Activated CD4-positive, alpha-beta T cell treated with anti-CD3 and anti-CD28 coated beads for 36 hours (primary cell): ENCODE measurements at regions of chr1 and their contacts with region 1.

Region 1: DNA sequence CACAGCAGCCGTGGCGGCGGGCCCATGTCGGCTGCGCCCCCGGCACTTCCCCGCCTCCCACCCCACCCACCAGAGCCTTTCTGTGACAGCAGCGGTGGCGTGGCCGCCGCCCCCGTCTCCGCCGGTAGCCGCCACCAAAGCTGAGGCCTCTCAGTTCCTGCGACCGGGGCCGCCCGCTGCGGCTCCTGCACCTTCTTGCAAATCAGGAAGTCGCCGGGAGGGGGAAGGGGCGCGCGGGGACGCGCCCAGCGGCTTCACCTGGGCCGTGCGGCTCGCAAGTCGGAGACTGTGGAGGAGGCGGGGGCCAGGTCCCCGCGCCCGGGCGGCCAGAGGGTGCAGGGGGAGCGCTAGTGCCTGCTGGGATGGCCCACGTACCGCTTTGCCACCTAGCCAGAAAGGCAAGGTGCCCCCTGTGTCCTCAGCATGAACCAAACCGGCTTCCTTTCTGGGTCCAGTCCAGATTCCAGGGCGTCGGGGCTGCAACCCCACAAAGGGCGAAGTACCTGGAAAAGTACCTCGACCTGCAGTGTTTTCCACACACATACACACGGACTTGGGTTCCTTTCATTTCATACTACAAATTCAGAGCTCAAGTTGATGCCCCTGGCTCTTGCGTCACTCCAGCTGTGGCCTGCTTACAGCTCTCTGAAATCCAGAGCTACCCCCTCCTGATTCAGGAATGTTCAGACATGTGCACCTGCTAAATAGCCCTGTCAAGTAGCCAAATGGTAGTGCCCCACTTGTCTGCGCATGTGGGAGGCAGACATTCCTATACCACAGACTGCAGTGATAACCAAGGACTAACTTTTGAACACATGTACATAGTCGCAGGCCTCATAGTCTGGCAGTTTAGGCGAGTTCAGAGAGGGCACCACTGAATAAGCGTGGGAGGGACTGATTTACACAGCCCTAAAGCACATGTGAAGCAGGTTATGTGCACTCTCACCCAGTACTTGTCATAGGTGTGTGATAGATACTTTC is at the start of gene DENND1B:
- DNase-seq: peak; percentile 88
- ATAC-seq: peak; percentile 78
- H3K4me3 Mint-ChIP-seq: peak within 1 kb of the TSS; percentile 90
- H3K27ac Mint-ChIP-seq: peak within 1 kb of the TSS; percentile 99
- H3K4me1 Mint-ChIP-seq: peaks cover 66% of the 10 kb centered on the region
- H3K27me3 Mint-ChIP-seq: no peaks in the 10 kb centered on the region
- total RNA-seq, gene DENND1B: 9.6 to 12.6 TPM

Region 2: DNA sequence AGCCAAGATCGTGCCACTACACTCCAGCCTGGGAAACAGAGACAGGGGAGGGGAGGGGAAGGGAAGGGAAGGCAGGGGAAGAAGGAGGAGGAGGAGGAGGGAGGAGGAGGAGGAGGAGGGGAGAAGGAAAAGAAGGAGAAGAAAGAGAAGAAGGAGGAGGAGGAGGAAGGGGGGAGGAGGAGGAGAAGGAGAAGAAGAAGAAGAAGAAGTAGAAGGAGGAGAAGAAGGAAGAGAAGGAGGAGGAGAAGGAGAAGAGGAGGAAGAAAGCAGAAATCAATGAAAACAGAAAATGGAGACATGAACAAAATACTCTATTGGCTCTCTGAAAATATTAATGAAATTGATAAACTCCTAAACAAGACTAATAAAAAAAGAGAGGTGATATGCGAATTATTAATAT is 23.8 kb before region 1 on chr1:
- CTCF ChIA-PET with region 1: interaction called, 3 read pairs
- POLR2A ChIA-PET with region 1: interaction called, 14 read pairs
- intact Hi-C with region 1: no loop called
- DNase-seq: no peak
- ATAC-seq: no peak
- H3K4me3 Mint-ChIP-seq: no peak overlapping the region
- H3K27ac Mint-ChIP-seq: no peak overlapping the region
- H3K4me1 Mint-ChIP-seq: peaks cover 44% of the 10 kb centered on the region
- H3K27me3 Mint-ChIP-seq: no peaks in the 10 kb centered on the region

Region 3: GRCh38 chr1:198253668-198254067 is 478.1 kb after region 1 on chr1:
- CTCF ChIA-PET with region 1: no interaction called
- POLR2A ChIA-PET with region 1: no interaction called
- intact Hi-C with region 1: loop called (anchors 5 kb)
- DNase-seq: peak; percentile 22
- ATAC-seq: peak; percentile 88
- H3K4me3 Mint-ChIP-seq: peak overlapping the region; percentile 16
- H3K27ac Mint-ChIP-seq: peak overlapping the region; percentile 79
- H3K4me1 Mint-ChIP-seq: peaks cover 50% of the 10 kb centered on the region
- H3K27me3 Mint-ChIP-seq: peaks cover 2% of the 10 kb centered on the region

Region 4: GRCh38 chr1:198530953-198531352 is 755.4 kb after region 1 on chr1:
- CTCF ChIA-PET with region 1: no interaction called
- POLR2A ChIA-PET with region 1: no interaction called
- intact Hi-C with region 1: no loop called
- DNase-seq: no peak
- ATAC-seq: no peak
- H3K4me3 Mint-ChIP-seq: no peak overlapping the region
- H3K27ac Mint-ChIP-seq: no peak overlapping the region
- H3K4me1 Mint-ChIP-seq: peaks cover 69% of the 10 kb centered on the region
- H3K27me3 Mint-ChIP-seq: no peaks in the 10 kb centered on the region

Region 5: GRCh38 chr1:198612471-198613260 is 837.1 kb after region 1 on chr1:
- CTCF ChIA-PET with region 1: no interaction called
- POLR2A ChIA-PET with region 1: no interaction called
- intact Hi-C with region 1: loop called in 1 of 2 experiments (anchors 10 kb)
- DNase-seq: no peak
- ATAC-seq: peak; percentile 48
- H3K4me3 Mint-ChIP-seq: peak overlapping the region; percentile 77
- H3K27ac Mint-ChIP-seq: peak overlapping the region; percentile 99
- H3K4me1 Mint-ChIP-seq: peaks cover 83% of the 10 kb centered on the region
- H3K27me3 Mint-ChIP-seq: no peaks in the 10 kb centered on the region

Region 6: GRCh38 chr1:198681831-198682759 is 906.5 kb after region 1 on chr1:
- CTCF ChIA-PET with region 1: no interaction called
- POLR2A ChIA-PET with region 1: no interaction called
- intact Hi-C with region 1: loop called (anchors 2 to 10 kb)
- DNase-seq: peak; percentile 89
- ATAC-seq: peak; percentile 76
- H3K4me3 Mint-ChIP-seq: peak overlapping the region; percentile 61
- H3K27ac Mint-ChIP-seq: peak overlapping the region; percentile 96
- H3K4me1 Mint-ChIP-seq: peaks cover 85% of the 10 kb centered on the region
- H3K27me3 Mint-ChIP-seq: no peaks in the 10 kb centered on the region

Region 7: DNA sequence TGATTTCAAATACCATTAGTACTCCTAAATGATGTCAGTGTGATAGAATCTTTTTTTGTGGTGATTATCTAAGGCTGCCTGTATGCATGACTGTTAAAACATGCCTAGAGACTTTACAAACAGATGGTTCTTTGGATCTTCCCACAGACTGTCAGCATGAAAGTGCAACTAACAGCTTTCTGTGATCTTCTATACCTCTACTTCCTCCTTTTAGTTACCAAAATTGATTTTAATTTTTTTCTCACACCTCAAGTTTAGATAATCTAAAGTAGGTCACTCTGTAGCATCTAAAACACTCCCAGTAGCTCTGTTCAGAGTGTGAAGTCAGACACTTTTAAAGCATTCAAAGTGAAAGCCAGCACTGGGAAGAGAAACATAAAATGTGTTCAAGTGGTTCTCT is 1397.8 kb after region 1 on chr1:
- CTCF ChIA-PET with region 1: no interaction called
- POLR2A ChIA-PET with region 1: no interaction called
- intact Hi-C with region 1: loop called in 1 of 2 experiments (anchors 10 kb)
- DNase-seq: peak; percentile 11
- ATAC-seq: peak; percentile 89
- H3K4me3 Mint-ChIP-seq: no peak overlapping the region
- H3K27ac Mint-ChIP-seq: peak overlapping the region; percentile 39
- H3K4me1 Mint-ChIP-seq: peaks cover 58% of the 10 kb centered on the region
- H3K27me3 Mint-ChIP-seq: peaks cover 3% of the 10 kb centered on the region